A673 (cell line): ENCODE measurements at regions of chr19 and their contacts with region 1.

Region 1: GRCh38 chr19:5621311-5621944 is 1.1 kb downstream of the SAFB2 start:
- DNase-seq: no peak
- H3K4me3 ChIP-seq: peak overlapping the region; percentile 100
- H3K27ac ChIP-seq: peak overlapping the region; percentile 96
- H3K4me1 ChIP-seq: peaks cover 31% of the 10 kb centered on the region
- H3K27me3 ChIP-seq: no peaks in the 10 kb centered on the region
- CTCF ChIP-seq: no peak

Region 2: GRCh38 chr19:5112681-5113557 is 508.5 kb before region 1 on chr19:
- CTCF ChIA-PET with region 1: interaction called, 12 read pairs
- POLR2A ChIA-PET with region 1: no interaction called
- intact Hi-C with region 1: no loop called
- DNase-seq: peak; percentile 77
- H3K4me3 ChIP-seq: no peak overlapping the region
- H3K27ac ChIP-seq: peak overlapping the region; percentile 65
- H3K4me1 ChIP-seq: peaks cover 27% of the 10 kb centered on the region
- H3K27me3 ChIP-seq: no peaks in the 10 kb centered on the region
- CTCF ChIP-seq: no peak